Endothelial cell of umbilical vein (primary cell): ENCODE measurements at regions of chr1 and their contacts with region 1.

Region 1: GRCh38 chr1:47437447-47438164 is at the start of gene FOXD2:
- DNase-seq: peak; percentile 82
- H3K4me3 ChIP-seq: peak within 1 kb of the TSS; percentile 55 to 71 (median 57)
- H3K27ac ChIP-seq: no peak within 1 kb of the TSS
- H3K4me1 ChIP-seq: peaks cover 17% of the 10 kb centered on the region
- H3K27me3 ChIP-seq: peaks cover 42 to 60% of the 10 kb centered on the region in 2 experiments
- CTCF ChIP-seq: peak; percentile 76 to 84
- POLR2A ChIP-seq: peak; percentile 39
- total RNA-seq, gene FOXD2: 0.07 and 0.09 TPM in 2 replicates

Region 2: DNA sequence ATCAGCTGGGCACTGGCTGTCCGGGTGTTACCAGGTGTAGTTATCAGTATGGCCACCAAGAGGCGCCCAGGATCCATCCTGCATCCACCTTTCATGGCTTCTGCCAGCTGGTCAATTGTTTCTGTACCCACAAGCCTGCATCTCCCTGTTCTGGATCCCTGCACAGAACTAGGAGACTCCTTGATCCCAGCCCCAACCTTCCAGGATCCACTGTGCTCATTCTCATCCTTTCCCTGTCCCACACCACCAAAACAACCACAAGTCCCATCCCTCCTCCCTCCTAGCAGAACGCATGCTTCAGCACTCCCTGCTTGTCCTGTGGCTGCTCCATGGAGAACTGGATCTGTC is 48.7 kb before region 1 on chr1:
- CTCF ChIA-PET with region 1: interaction called, 21 read pairs
- POLR2A ChIA-PET with region 1: no interaction called
- dilution Hi-C with region 1: no loop called
- intact Hi-C with region 1: loop called (anchors 2 kb)
- DNase-seq: peak; percentile 68
- H3K4me3 ChIP-seq: no peak overlapping the region
- H3K27ac ChIP-seq: no peak overlapping the region
- H3K4me1 ChIP-seq: no peaks in the 10 kb centered on the region
- H3K27me3 ChIP-seq: peaks cover 0 to 2% of the 10 kb centered on the region in 2 experiments
- CTCF ChIP-seq: peak; percentile 66 to 84
- POLR2A ChIP-seq: no peak

Region 3: DNA sequence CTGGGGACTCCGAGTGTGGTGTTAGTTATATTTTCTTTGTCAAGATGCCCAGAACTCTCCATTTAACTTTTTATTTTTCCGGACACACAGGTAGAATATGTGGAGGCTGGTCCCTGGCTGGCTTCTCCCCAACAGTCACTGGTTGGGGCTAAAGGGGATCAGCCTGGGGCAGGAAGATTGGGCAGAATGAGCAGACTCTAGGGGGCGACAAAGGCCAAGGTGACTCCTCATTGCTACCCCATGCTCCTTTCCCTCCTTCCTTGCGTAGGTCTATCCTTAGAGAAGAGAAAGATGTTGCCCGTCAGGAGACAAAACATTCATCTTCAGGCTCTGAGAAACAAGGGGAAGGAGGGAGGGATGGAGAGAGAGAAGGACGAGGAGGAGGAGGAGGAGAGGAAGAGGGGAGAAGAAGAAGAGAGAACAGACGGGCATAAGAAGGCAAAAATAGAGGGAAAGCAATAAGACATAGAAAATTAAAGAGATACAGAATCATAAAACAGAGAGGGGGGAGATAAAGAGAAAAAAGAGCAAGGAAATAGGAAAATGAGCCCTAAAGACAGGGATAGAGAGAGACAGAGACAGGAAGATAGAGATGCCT is 90.2 kb after region 1 on chr1:
- CTCF ChIA-PET with region 1: interaction called, 22 read pairs
- POLR2A ChIA-PET with region 1: no interaction called
- dilution Hi-C with region 1: no loop called
- intact Hi-C with region 1: loop called (anchors 2 kb)
- DNase-seq: peak; percentile 28
- H3K4me3 ChIP-seq: no peak overlapping the region
- H3K27ac ChIP-seq: no peak overlapping the region
- H3K4me1 ChIP-seq: no peaks in the 10 kb centered on the region
- H3K27me3 ChIP-seq: peaks cover 11 to 20% of the 10 kb centered on the region in 2 experiments
- CTCF ChIP-seq: peak; percentile 38 to 61
- POLR2A ChIP-seq: no peak

Region 4: GRCh38 chr1:47569681-47570470 is 132.3 kb after region 1 on chr1:
- CTCF ChIA-PET with region 1: interaction called, 9 read pairs
- POLR2A ChIA-PET with region 1: no interaction called
- dilution Hi-C with region 1: no loop called
- intact Hi-C with region 1: loop called (anchors 1 kb)
- DNase-seq: peak; percentile 93
- H3K4me3 ChIP-seq: no peak overlapping the region
- H3K27ac ChIP-seq: peak overlapping the region; percentile 23
- H3K4me1 ChIP-seq: peaks cover 25% of the 10 kb centered on the region
- H3K27me3 ChIP-seq: no peaks in the 10 kb centered on the region
- CTCF ChIP-seq: peak; percentile 28 to 35
- POLR2A ChIP-seq: no peak

Region 5: DNA sequence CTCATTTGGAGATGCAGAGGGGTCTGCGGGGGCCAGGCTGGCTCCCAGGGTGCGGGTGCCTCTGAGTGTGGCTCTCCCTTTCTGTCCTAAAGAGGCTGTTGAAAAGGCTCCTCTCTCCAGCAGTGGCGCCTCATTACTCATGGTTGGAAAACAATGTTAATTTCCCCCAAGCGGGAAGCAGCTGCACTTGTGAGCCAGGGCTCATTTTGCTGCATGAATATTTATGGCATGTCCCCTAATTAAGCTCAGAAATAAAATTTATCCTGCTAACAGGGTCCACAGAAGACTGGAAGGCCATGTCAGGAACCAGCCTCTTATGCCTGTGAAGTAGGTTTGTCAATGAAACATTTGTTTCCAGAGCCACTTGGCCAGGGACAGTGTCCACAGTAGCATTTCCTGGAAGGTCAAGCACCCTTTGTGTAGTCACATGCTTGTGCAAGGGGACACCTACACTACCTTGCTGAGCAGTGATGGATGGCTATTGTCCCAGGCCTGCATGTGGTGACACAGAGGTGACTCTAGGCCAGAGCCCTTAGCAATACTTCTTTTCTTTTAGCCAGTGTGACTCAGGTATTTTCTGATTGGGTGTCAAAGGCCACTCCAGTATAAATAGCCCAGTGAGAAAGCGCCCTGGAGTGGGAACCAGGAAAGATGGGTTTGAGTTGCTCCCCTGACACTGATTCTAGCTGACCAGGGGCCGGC is 259.3 kb after region 1 on chr1:
- CTCF ChIA-PET with region 1: interaction called, 416 read pairs
- POLR2A ChIA-PET with region 1: no interaction called
- dilution Hi-C with region 1: no loop called
- intact Hi-C with region 1: no loop called
- DNase-seq: peak; percentile 10
- H3K4me3 ChIP-seq: no peak overlapping the region
- H3K27ac ChIP-seq: no peak overlapping the region
- H3K4me1 ChIP-seq: no peaks in the 10 kb centered on the region
- H3K27me3 ChIP-seq: no peaks in the 10 kb centered on the region
- CTCF ChIP-seq: no peak
- POLR2A ChIP-seq: no peak

Region 6: GRCh38 chr1:47717341-47717740 is 279.7 kb after region 1 on chr1:
- CTCF ChIA-PET with region 1: interaction called, 691 read pairs
- POLR2A ChIA-PET with region 1: no interaction called
- dilution Hi-C with region 1: no loop called
- intact Hi-C with region 1: no loop called
- DNase-seq: no peak
- H3K4me3 ChIP-seq: no peak overlapping the region
- H3K27ac ChIP-seq: no peak overlapping the region
- H3K4me1 ChIP-seq: no peaks in the 10 kb centered on the region
- H3K27me3 ChIP-seq: peaks cover 35 to 37% of the 10 kb centered on the region in 2 experiments
- CTCF ChIP-seq: no peak
- POLR2A ChIP-seq: no peak